CD4-positive, alpha-beta memory T cell (primary cell): ENCODE measurements at regions of chr6 and their contacts with region 1.

Region 1: DNA sequence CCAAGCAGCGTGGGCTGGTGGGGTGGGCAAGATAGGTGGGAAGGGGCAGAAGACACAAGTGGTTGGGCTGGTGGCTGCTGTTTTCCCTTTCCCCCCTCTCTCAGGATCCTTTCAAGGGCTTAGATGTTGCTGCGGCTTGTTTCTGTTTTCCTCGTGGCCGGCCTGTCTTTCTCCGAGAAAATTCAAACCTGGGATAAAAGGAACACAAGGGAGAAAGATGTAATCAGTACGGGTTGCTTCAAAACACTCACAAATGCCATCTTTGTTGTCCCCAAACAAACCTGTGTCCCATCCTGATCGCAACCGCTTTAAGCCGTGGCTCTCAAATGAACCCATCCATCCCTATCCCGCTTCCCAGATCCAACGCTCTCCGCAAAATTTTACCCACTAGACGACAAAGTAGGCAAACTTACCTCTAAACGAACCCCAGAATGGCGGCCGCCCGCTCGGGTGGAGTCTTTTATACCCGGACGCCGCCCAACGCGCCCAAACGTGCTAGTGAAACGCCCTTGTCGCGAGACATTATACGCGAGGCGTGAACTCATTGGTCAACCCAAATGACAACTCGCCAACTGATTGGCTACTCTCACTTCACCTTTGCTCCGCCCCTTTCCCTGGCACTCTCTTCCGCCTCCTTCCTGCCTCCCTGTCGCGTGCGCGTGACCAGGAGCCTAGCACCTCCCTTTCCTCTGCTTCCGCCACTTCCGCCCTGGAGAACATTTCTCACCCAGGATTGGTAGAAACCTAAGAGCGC is at the start of gene PPP1R10:
- DNase-seq: peak; percentile 98 to 100 (median 100)
- H3K4me3 ChIP-seq: peak within 1 kb of the TSS; percentile 91 to 95
- H3K4me3 Mint-ChIP-seq: peak within 1 kb of the TSS; percentile 97 to 100 (median 100)
- H3K27ac ChIP-seq: peak within 1 kb of the TSS; percentile 94
- H3K27ac Mint-ChIP-seq: peak within 1 kb of the TSS; percentile 100
- H3K4me1 ChIP-seq: peaks cover 45% of the 10 kb centered on the region
- H3K4me1 Mint-ChIP-seq: peaks cover 22 to 62% (median 35%) of the 10 kb centered on the region in 4 donors
- H3K27me3 ChIP-seq: no peaks in the 10 kb centered on the region
- H3K27me3 Mint-ChIP-seq: peaks cover 0 to 1% of the 10 kb centered on the region in 2 donors
- total RNA-seq, gene PPP1R10: 224 to 231 TPM

Region 2: GRCh38 chr6:30319146-30319835 is 297.7 kb before region 1 on chr6:
- CTCF ChIA-PET with region 1: no interaction called
- POLR2A ChIA-PET with region 1: no interaction called
- intact Hi-C with region 1: no loop called
- DNase-seq: no peak
- H3K4me3 ChIP-seq: no peak overlapping the region
- H3K4me3 Mint-ChIP-seq: peak overlapping the region in 4 of 8 donors; percentile 2 to 16 (median 10)
- H3K27ac ChIP-seq: no peak overlapping the region
- H3K27ac Mint-ChIP-seq: peak overlapping the region in 6 of 7 donors; percentile 3 to 80 (median 69)
- H3K4me1 ChIP-seq: peaks cover 72% of the 10 kb centered on the region
- H3K4me1 Mint-ChIP-seq: peaks cover 50 to 93% (median 70%) of the 10 kb centered on the region in 4 donors
- H3K27me3 ChIP-seq: no peaks in the 10 kb centered on the region
- H3K27me3 Mint-ChIP-seq: no peaks in the 10 kb centered on the region

Region 3: DNA sequence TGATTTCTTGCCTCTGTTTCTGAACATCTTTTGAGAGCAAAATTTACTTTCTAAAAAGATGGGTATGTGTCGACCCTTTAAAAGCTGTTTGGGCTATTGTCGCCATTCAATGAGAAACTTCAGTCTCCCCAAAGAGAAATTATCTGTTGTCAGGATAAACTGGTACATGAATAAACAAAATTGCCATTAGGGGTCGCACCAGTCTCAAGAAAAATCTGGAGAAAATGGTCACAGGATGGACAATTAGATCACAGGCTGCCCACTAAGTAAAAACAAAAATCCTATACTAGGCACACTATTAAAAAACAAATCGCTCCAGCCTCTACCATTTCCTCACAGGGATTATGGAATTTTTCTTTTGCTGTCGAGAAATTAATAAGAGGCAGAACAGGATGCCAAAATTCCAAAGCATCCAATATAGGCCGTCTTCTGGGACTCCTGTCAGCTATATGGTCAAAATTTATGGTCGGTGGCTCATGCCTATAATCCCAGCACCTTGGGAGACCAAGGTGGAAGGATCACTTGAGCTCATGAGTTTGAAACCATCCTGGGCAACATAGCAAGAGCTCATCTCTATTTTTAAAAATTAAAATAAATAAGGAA is 133.2 kb before region 1 on chr6:
- CTCF ChIA-PET with region 1: interaction called, 22 read pairs
- POLR2A ChIA-PET with region 1: interaction called, 9 read pairs
- intact Hi-C with region 1: no loop called
- DNase-seq: peak in 4 of 5 donors; percentile 44 to 57 (median 48)
- H3K4me3 ChIP-seq: no peak overlapping the region
- H3K4me3 Mint-ChIP-seq: no peak overlapping the region
- H3K27ac ChIP-seq: no peak overlapping the region
- H3K27ac Mint-ChIP-seq: peak overlapping the region in 2 of 7 donors; percentile 8 to 29
- H3K4me1 ChIP-seq: peaks cover 24% of the 10 kb centered on the region
- H3K4me1 Mint-ChIP-seq: peaks cover 27 to 42% (median 31%) of the 10 kb centered on the region in 4 donors
- H3K27me3 ChIP-seq: peaks cover 22% of the 10 kb centered on the region
- H3K27me3 Mint-ChIP-seq: peaks cover 18 to 22% of the 10 kb centered on the region in 2 donors

Region 4: GRCh38 chr6:30533460-30534294 is 83.3 kb before region 1 on chr6:
- CTCF ChIA-PET with region 1: interaction called, 10 read pairs
- POLR2A ChIA-PET with region 1: interaction called, 12 read pairs
- intact Hi-C with region 1: no loop called
- DNase-seq: peak in 4 of 5 donors; percentile 31 to 52 (median 50)
- H3K4me3 ChIP-seq: no peak overlapping the region
- H3K4me3 Mint-ChIP-seq: peak overlapping the region; percentile 82 to 96 (median 92)
- H3K27ac ChIP-seq: peak overlapping the region; percentile 32
- H3K27ac Mint-ChIP-seq: peak overlapping the region; percentile 85 to 99 (median 95)
- H3K4me1 ChIP-seq: peaks cover 37% of the 10 kb centered on the region
- H3K4me1 Mint-ChIP-seq: peaks cover 25 to 45% (median 35%) of the 10 kb centered on the region in 4 donors
- H3K27me3 ChIP-seq: no peaks in the 10 kb centered on the region
- H3K27me3 Mint-ChIP-seq: no peaks in the 10 kb centered on the region

Region 5: DNA sequence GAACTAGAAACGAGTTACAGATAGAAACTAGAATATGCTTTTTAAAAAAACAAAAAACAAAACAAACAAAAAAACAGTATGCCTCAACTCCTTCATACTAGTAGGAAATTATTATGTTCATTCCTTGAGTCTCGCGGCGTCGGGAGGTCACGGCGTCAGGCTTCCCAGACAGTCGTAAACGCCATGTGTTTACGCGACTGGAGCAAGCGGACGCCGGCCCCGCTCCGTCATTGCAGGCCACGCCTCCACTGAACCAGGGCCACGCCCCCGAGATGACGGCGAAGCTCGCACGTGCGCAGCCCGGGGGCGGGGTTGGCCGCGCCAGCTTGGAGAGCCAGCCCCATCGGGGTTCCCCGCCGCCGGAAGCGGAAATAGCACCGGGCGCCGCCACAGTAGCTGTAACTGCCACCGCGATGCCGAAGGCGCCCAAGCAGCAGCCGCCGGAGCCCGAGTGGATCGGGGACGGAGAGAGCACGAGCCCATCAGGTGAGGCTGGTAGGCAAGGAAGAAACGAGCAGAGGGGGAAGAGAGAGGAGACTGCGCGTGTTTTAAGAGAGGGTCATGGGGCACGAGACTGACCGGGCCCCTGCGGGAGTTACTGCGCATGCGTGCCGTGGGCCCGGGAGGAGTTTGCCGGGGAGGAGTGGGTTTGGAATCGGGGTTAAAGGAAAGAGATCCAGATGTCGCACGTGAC is 45.8 kb before region 1 on chr6 and contains the start of gene ABCF1:
- CTCF ChIA-PET with region 1: interaction called, 6 read pairs
- POLR2A ChIA-PET with region 1: interaction called, 61 read pairs
- intact Hi-C with region 1: loop called (anchors 1 kb)
- DNase-seq: peak; percentile 98 to 100 (median 99)
- H3K4me3 ChIP-seq: peak within 1 kb of the TSS; percentile 88 to 94
- H3K4me3 Mint-ChIP-seq: peak within 1 kb of the TSS; percentile 97 to 100 (median 100)
- H3K27ac ChIP-seq: peak within 1 kb of the TSS; percentile 95
- H3K27ac Mint-ChIP-seq: peak within 1 kb of the TSS; percentile 97 to 100 (median 99)
- H3K4me1 ChIP-seq: peaks cover 45% of the 10 kb centered on the region
- H3K4me1 Mint-ChIP-seq: peaks cover 48 to 65% (median 54%) of the 10 kb centered on the region in 4 donors
- H3K27me3 ChIP-seq: no peaks in the 10 kb centered on the region
- H3K27me3 Mint-ChIP-seq: no peaks in the 10 kb centered on the region
- total RNA-seq, gene ABCF1: 60.8 to 66.8 TPM

Region 6: DNA sequence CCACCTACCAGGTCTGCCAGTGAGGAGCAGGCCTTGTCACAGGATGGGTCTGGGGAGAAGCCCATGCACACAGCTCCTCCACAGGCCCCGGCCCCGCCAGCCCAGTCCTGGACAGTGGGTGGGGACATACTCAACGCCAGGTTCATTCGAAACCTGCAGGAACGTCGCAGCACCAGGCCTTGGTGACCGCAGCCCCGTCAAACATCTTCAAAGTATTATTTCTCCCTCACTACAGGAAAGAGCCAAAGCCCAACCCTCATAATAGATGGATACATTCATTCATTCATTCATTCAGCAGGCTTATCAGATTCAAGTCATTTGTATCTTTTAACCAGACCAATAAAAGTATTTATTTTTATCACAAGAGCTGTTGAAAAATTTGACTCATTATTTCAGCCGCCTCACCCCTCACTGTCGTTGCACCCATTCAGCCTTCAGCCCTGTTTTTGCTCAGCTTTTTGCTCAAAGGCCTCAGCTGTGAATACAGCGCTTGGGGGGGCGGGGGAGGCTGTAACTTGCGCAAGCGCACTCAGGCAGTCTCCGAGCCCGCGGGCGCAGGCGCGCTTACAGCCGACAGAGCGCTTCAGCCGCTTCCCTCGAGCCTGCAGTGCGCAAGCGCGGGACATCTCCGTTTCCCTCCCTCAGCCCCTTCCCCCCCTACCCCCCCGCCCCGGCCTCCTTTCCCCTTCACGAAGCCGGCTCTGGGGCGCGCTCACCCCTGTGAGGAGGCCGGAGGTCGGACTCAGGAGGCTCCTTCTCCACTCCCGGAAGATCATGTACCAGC is 29.7 kb after region 1 on chr6 and contains the start of gene C6orf136:
- CTCF ChIA-PET with region 1: no interaction called
- POLR2A ChIA-PET with region 1: interaction called, 58 read pairs
- intact Hi-C with region 1: loop called (anchors 1 kb)
- DNase-seq: peak; percentile 86 to 94 (median 93)
- H3K4me3 ChIP-seq: peak within 1 kb of the TSS; percentile 74 to 91
- H3K4me3 Mint-ChIP-seq: peak within 1 kb of the TSS; percentile 85 to 92 (median 89)
- H3K27ac ChIP-seq: peak within 1 kb of the TSS; percentile 89
- H3K27ac Mint-ChIP-seq: peak within 1 kb of the TSS; percentile 85 to 95 (median 92)
- H3K4me1 ChIP-seq: peaks cover 20% of the 10 kb centered on the region
- H3K4me1 Mint-ChIP-seq: peaks cover 17 to 29% (median 22%) of the 10 kb centered on the region in 4 donors
- H3K27me3 ChIP-seq: no peaks in the 10 kb centered on the region
- H3K27me3 Mint-ChIP-seq: no peaks in the 10 kb centered on the region
- total RNA-seq, gene C6orf136: 29.3 to 35.0 TPM

Region 7: DNA sequence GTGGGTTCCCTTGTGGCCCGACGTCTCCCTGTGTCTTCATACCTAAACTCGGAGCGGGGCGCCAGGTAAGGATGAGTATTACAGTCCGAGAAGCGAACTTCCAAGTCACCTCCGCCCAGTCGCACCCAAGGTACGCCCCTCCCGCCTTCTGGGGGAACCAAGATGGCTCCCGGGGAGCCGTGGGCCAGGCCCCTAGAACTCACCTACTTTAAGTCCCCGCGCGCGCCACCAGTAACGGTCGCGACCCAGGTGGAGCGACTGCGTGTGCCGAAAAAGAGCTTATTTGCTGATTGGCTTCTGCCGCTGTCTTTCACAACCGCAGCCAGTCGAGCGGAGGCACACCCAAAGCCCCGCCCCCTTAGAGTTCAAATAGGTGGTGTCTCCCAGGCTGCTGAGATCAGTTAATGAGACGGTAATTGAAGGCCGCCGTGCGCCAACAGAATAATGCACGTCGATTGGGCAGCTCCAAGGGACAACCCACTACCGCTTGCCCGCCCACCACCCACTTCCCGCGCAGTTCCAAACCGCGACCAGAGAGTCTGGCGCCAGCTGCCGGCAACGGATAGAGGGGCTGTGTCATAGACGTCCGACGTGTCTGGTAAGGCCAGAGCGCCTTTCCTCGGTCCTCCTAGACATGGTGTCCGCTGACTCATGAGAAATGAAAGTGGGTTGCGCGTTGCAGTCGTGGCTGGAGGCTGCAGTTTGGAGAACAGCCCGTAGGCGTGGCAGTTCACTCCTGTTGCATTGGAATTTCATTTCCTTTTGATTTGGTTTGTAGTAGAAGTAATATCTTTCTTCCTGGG is 100.3 kb after region 1 on chr6 and contains the start of gene MDC1:
- CTCF ChIA-PET with region 1: interaction called, 33 read pairs
- POLR2A ChIA-PET with region 1: interaction called, 100 read pairs
- intact Hi-C with region 1: loop called (anchors 1 kb)
- DNase-seq: peak; percentile 99 to 100 (median 100)
- H3K4me3 ChIP-seq: peak within 1 kb of the TSS; percentile 67 to 80
- H3K4me3 Mint-ChIP-seq: peak within 1 kb of the TSS; percentile 88 to 99 (median 98)
- H3K27ac ChIP-seq: peak within 1 kb of the TSS; percentile 69
- H3K27ac Mint-ChIP-seq: peak within 1 kb of the TSS; percentile 96 to 100 (median 98)
- H3K4me1 ChIP-seq: peaks cover 40% of the 10 kb centered on the region
- H3K4me1 Mint-ChIP-seq: peaks cover 22 to 70% (median 44%) of the 10 kb centered on the region in 4 donors
- H3K27me3 ChIP-seq: no peaks in the 10 kb centered on the region
- H3K27me3 Mint-ChIP-seq: no peaks in the 10 kb centered on the region
- total RNA-seq, gene MDC1: 60.7 to 73.5 TPM